ENCODE measurements at regions of chr9 and their contacts with region 1.

Region 1: DNA sequence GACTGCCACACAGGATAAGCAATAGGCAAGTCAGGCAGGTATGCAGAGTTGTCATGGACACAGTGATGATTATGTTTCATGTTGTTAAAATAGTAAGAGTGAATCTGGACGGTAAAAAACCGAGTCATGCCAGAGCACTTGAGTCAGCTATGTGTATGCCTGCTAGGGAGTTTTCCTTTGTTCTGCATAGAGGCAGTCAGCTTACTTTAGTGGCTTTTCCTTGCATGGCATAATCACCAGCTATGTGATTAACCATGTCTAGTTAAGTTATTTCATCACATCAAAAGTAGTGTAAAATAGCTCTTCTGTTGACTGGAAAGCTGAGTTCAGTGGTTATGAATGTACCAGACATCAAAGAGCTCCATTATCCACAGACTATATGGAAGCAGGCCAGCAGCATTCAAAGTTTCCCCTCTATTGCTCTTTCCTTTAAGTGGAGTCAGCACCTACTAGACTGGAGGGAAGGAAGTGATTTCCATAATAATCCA is 989.8 kb downstream of the TLE1 start:
- DNase-seq: peak; percentile 94
- H3K4me3 ChIP-seq: no peak overlapping the region
- H3K27ac ChIP-seq: no peak overlapping the region
- H3K4me1 ChIP-seq: peaks cover 19% of the 10 kb centered on the region
- H3K27me3 ChIP-seq: no peaks in the 10 kb centered on the region
- CTCF ChIP-seq: no peak

Region 2: DNA sequence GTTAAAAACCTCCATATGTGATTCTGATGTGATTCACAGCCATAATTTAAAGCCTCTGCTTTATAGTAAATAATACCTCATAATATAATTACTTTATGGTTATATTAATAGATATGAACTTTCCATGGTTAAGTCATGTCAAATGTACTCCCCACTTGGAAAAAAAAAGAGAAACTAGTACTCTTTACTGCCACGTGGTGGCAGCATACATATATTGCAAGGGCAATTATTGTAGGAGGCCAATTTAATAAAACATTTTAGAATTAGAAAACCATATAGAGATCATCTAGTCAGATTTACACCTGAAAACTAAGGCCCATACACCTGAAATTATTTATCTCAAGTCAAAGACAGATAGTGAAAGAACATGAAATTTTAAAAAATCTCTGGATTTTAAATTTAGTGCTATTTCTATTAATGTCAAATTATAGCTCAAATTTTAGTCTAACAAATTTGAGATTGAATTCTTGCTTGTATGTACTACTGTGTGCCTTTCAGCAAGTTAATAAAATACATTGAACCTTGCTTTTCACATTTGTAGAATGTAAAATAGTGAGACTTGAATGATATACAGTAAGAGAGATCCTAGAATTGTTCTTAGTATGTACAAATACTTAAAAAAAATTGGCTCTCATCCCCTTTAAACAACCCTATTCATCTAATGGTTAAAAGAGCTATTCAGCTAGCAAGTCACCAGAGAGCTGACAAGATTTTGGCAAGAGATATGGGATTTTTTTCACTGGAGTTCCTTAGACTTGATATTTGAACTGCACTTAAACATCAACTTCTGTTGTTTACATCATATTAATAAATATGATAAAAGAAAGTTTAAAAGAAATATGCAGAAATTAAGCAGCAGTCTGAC is 524.0 kb before region 1 on chr9:
- CTCF ChIA-PET with region 1: no interaction called
- POLR2A ChIA-PET with region 1: no interaction called
- intact Hi-C with region 1: loop called (anchors 5 kb)
- DNase-seq: peak; percentile 56
- H3K4me3 ChIP-seq: no peak overlapping the region
- H3K27ac ChIP-seq: no peak overlapping the region
- H3K4me1 ChIP-seq: peaks cover 3% of the 10 kb centered on the region
- H3K27me3 ChIP-seq: no peaks in the 10 kb centered on the region
- CTCF ChIP-seq: peak; percentile 78

Region 3: GRCh38 chr9:80485420-80486250 is 213.9 kb before region 1 on chr9:
- CTCF ChIA-PET with region 1: no interaction called
- POLR2A ChIA-PET with region 1: no interaction called
- intact Hi-C with region 1: no loop called
- DNase-seq: peak; percentile 62
- H3K4me3 ChIP-seq: no peak overlapping the region
- H3K27ac ChIP-seq: peak overlapping the region; percentile 61
- H3K4me1 ChIP-seq: peaks cover 6% of the 10 kb centered on the region
- H3K27me3 ChIP-seq: no peaks in the 10 kb centered on the region
- CTCF ChIP-seq: no peak

Region 4: GRCh38 chr9:80649001-80649420 is 50.5 kb before region 1 on chr9:
- CTCF ChIA-PET with region 1: no interaction called
- POLR2A ChIA-PET with region 1: no interaction called
- intact Hi-C with region 1: loop called (anchors 5 kb)
- DNase-seq: no peak
- H3K4me3 ChIP-seq: no peak overlapping the region
- H3K27ac ChIP-seq: no peak overlapping the region
- H3K4me1 ChIP-seq: no peaks in the 10 kb centered on the region
- H3K27me3 ChIP-seq: no peaks in the 10 kb centered on the region
- CTCF ChIP-seq: no peak

Region 5: DNA sequence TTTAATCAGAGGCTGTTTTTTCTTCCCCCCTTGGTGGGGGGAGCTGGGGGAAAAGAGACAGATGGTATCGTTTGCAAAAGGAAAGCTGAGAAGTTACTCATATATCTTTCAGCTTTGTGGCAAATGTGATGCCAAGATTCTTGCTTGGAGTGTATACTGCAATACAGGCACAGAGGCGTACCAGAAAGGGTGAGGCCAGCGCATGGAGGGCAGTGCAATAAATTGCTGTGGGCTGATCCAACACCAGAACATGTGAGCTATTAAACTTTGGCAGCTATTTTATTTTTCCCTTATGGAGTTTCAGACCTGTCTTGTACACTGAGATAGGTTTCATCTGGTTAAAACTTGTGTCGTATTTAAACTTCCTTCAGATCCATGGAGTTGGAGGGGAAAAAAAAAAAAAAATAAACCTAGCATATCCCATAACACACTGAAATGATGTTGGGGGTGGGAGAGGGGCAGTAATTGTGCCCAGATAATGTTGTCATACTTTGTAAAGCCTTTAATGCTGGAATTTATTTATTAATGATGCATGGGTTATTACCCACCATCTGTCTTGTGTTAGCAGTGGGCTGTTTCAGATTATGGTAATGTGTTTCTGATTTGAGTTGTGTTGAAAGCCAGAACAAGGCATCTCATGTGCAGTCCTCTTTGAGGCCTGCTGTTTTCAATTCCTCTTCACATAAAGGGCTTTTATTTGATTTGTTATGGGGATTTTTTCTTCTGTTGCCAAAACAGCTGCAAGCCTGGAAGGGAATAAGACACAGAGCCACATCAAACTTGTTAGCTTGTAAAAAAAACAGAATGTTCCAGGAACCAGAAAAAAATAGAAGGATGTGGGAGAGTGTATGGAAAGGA is 98.5 kb after region 1 on chr9:
- CTCF ChIA-PET with region 1: no interaction called
- POLR2A ChIA-PET with region 1: no interaction called
- intact Hi-C with region 1: loop called (anchors 2 kb)
- DNase-seq: peak; percentile 93
- H3K4me3 ChIP-seq: no peak overlapping the region
- H3K27ac ChIP-seq: peak overlapping the region; percentile 22
- H3K4me1 ChIP-seq: peaks cover 26% of the 10 kb centered on the region
- H3K27me3 ChIP-seq: no peaks in the 10 kb centered on the region
- CTCF ChIP-seq: no peak

Measured in A673 (cell line).